CD4-positive, alpha-beta memory T cell (primary cell): ENCODE measurements at regions of chr5 and their contacts with region 1.

Region 1: DNA sequence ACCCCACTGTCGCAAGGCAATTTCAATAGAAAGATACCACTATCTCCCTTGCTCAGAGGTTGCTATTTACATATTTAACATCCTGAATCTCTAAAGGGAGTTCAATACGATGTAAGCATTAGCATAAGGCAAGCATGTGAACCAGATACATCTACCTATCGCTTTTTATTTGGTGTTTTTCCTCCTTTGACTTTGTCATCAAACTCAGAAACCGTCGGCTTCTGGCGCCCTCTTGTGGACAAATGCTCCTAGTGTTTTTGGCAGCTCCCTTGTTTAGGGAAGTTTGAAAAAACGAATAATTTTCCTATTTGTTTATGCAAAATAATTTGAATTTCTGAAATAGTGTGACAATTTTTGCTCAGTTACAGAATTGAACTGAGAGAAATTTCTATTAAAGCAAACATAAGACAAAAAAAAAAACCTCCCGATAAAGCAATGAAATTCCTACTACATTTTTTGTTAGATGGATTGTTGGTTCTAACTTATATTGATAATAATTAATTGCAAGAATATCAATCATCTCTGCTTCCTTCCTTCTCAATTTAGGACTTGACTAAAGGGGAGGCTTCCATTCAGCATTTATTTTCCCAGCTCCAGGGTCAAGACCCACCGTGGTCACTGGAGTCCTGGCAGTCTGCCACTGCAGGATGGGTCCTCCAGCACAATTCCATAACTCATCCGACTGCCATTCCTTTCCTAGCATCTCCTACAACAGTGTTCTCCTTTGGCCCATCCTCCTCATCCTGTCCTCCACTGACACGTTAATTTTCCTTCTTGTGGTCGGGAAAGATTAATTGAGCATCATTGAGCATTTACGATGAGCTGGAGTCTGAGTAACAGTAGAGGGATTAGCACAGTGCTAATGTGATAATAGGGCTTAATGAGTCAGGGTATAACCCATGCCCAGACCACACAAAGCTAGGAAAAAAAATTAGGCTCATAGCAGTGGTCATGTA is 131.8 kb upstream of the CHD1 start:
- DNase-seq: peak; percentile 77 to 84 (median 82)
- H3K4me3 ChIP-seq: no peak overlapping the region
- H3K4me3 Mint-ChIP-seq: peak overlapping the region in 5 of 8 donors; percentile 22 to 54 (median 40)
- H3K27ac ChIP-seq: no peak overlapping the region
- H3K27ac Mint-ChIP-seq: peak overlapping the region in 2 of 7 donors; percentile 53 to 71
- H3K4me1 ChIP-seq: no peaks in the 10 kb centered on the region
- H3K4me1 Mint-ChIP-seq: peaks cover 2 to 19% (median 11%) of the 10 kb centered on the region in 4 donors
- H3K27me3 ChIP-seq: no peaks in the 10 kb centered on the region
- H3K27me3 Mint-ChIP-seq: peaks cover 0 to 2% of the 10 kb centered on the region in 2 donors

Region 2: DNA sequence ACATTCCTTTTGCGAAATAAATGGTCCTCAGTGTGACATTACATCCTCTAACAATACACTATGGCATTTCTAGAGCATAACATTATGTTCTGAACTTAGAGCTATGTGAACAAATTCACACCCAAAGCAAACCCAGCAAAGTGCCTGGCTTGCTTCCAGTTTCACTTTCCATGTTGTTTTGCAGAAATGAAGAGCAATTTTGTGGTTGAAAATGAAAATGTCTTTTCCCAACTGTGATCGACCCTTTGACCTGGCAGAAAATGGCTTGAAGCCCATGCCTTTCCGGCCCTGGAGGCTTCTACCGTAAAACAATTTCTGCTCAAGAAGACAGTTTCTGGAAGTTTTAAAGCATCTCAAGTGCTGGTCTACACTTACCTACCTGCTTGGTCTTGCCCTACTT is 631.8 kb before region 1 on chr5:
- CTCF ChIA-PET with region 1: no interaction called
- POLR2A ChIA-PET with region 1: no interaction called
- intact Hi-C with region 1: no loop called
- DNase-seq: no peak
- H3K4me3 ChIP-seq: no peak overlapping the region
- H3K4me3 Mint-ChIP-seq: no peak overlapping the region
- H3K27ac ChIP-seq: no peak overlapping the region
- H3K27ac Mint-ChIP-seq: no peak overlapping the region
- H3K4me1 ChIP-seq: no peaks in the 10 kb centered on the region
- H3K4me1 Mint-ChIP-seq: peaks cover 0 to 6% (median 0%) of the 10 kb centered on the region in 4 donors
- H3K27me3 ChIP-seq: no peaks in the 10 kb centered on the region
- H3K27me3 Mint-ChIP-seq: no peaks in the 10 kb centered on the region

Region 3: GRCh38 chr5:98905857-98906690 is 154.5 kb before region 1 on chr5:
- CTCF ChIA-PET with region 1: interaction called, 72 read pairs
- POLR2A ChIA-PET with region 1: interaction called, 22 read pairs
- intact Hi-C with region 1: loop called (anchors 1 kb)
- DNase-seq: peak in 4 of 5 donors; percentile 63 to 69 (median 66)
- H3K4me3 ChIP-seq: no peak overlapping the region
- H3K4me3 Mint-ChIP-seq: peak overlapping the region in 2 of 8 donors; percentile 3 to 11
- H3K27ac ChIP-seq: no peak overlapping the region
- H3K27ac Mint-ChIP-seq: peak overlapping the region in 6 of 7 donors; percentile 1 to 54 (median 10)
- H3K4me1 ChIP-seq: peaks cover 48% of the 10 kb centered on the region
- H3K4me1 Mint-ChIP-seq: peaks cover 33 to 58% (median 44%) of the 10 kb centered on the region in 4 donors
- H3K27me3 ChIP-seq: no peaks in the 10 kb centered on the region
- H3K27me3 Mint-ChIP-seq: no peaks in the 10 kb centered on the region

Region 4: DNA sequence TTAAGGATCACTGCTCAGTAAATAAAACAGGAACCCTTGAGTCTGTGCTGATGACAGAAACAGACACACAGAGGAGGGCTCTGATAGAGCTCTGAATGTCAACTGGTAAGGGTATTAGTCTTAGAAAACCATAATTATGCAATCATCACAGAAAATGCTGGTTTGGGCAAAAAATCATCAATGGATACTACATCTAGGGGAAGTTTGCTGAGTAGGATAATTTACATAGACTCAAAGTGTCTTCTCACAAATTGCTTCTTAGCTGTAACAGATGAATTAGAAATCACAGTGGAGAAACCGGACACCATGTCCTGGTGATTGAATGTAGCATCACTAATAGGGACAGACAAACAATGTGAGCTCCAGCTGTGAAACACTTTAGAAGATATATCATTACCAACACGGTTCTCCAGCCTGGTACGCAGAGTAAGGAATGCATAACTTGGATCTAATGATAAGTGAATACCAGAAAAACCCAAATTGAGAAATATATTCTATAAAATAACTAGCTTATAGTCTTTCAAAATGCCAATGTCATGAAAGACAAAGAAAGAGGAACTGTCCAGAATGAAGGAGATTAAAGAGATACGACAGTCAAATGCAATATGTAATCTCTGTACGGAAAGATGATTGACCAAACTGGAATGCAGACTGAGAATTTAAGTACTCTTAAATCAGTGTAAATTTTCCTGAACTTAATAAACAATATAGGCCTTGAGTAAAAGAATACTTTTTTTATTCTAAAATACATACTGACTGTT is 149.1 kb before region 1 on chr5:
- CTCF ChIA-PET with region 1: interaction called, 41 read pairs
- POLR2A ChIA-PET with region 1: interaction called, 5 read pairs
- intact Hi-C with region 1: loop called (anchors 1 kb)
- DNase-seq: no peak
- H3K4me3 ChIP-seq: no peak overlapping the region
- H3K4me3 Mint-ChIP-seq: peak overlapping the region in 2 of 8 donors; percentile 7 to 26
- H3K27ac ChIP-seq: no peak overlapping the region
- H3K27ac Mint-ChIP-seq: peak overlapping the region in 4 of 7 donors; percentile 0 to 69 (median 20)
- H3K4me1 ChIP-seq: peaks cover 80% of the 10 kb centered on the region
- H3K4me1 Mint-ChIP-seq: peaks cover 50 to 78% (median 64%) of the 10 kb centered on the region in 4 donors
- H3K27me3 ChIP-seq: no peaks in the 10 kb centered on the region
- H3K27me3 Mint-ChIP-seq: no peaks in the 10 kb centered on the region

Region 5: GRCh38 chr5:99025298-99026045 is 35.1 kb before region 1 on chr5:
- CTCF ChIA-PET with region 1: interaction called, 21 read pairs
- POLR2A ChIA-PET with region 1: interaction called, 6 read pairs
- intact Hi-C with region 1: no loop called
- DNase-seq: no peak
- H3K4me3 ChIP-seq: no peak overlapping the region
- H3K4me3 Mint-ChIP-seq: no peak overlapping the region
- H3K27ac ChIP-seq: no peak overlapping the region
- H3K27ac Mint-ChIP-seq: no peak overlapping the region
- H3K4me1 ChIP-seq: peaks cover 17% of the 10 kb centered on the region
- H3K4me1 Mint-ChIP-seq: peaks cover 21 to 38% (median 27%) of the 10 kb centered on the region in 4 donors
- H3K27me3 ChIP-seq: no peaks in the 10 kb centered on the region
- H3K27me3 Mint-ChIP-seq: no peaks in the 10 kb centered on the region

Region 6: DNA sequence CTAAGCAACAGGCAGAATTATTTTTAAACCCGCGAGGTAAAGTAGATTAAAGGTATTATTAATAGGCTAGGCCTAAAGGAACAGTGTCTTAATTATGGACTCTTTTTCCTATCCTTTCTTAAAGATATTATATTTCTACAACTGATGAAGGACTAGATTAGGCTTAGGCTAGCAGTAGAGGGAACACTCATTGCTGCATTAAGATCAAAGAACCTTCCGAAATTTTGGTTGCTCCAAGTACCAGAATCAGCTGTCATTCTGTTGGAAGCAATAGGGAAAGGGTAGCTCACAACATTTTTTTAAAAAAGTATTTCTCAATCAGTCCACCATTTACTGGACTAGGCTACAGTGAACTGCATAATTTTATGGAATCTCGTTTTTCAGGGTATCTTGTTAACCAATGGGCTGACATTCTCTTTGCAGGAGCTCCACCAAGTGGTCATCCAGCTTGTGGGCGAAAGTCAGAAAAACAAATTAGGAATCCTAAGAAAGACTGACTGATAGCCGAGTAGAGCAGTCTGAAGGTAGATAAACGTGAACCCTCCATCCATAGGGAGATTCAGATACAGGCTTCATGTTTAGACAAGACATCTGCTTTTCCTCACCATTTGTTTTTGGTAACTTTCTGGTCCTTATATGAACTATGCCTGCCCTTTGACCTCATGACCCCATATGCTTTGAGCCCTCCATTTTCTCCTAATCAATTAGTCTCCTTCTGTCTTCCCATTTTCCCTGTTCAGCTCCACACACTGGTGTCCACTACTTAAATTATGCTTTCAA is 28.2 kb before region 1 on chr5:
- CTCF ChIA-PET with region 1: interaction called, 37 read pairs
- POLR2A ChIA-PET with region 1: interaction called, 25 read pairs
- intact Hi-C with region 1: loop called (anchors 1 kb)
- DNase-seq: peak in 3 of 5 donors; percentile 18 to 21 (median 19)
- H3K4me3 ChIP-seq: peak overlapping the region in 1 of 2 donors; percentile 33
- H3K4me3 Mint-ChIP-seq: peak overlapping the region; percentile 82 to 92 (median 88)
- H3K27ac ChIP-seq: peak overlapping the region; percentile 71
- H3K27ac Mint-ChIP-seq: peak overlapping the region; percentile 90 to 99 (median 98)
- H3K4me1 ChIP-seq: peaks cover 69% of the 10 kb centered on the region
- H3K4me1 Mint-ChIP-seq: peaks cover 58 to 89% (median 71%) of the 10 kb centered on the region in 4 donors
- H3K27me3 ChIP-seq: no peaks in the 10 kb centered on the region
- H3K27me3 Mint-ChIP-seq: no peaks in the 10 kb centered on the region

Region 7: DNA sequence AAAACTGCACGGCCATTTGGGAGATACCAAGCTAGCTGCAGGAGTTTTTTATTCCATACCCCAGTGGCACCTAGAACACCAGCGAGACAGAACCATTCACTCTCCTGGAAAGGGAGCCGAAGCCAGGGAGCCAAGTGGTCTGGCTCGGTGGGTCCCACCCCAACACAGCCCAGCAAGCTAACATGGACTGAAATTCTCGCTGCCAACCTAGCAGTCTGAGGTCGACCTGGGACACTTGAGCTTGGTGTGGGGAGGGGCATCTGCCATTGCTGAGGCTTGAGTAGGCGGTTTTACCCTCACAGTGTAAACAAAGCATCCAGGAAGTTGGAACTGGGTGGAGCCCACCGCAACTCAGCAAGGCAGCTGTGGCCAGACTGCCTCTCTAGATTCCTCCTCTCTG is 22.9 kb before region 1 on chr5:
- CTCF ChIA-PET with region 1: interaction called, 37 read pairs
- POLR2A ChIA-PET with region 1: interaction called, 25 read pairs
- intact Hi-C with region 1: loop called (anchors 1 kb)
- DNase-seq: peak; percentile 78 to 85 (median 81)
- H3K4me3 ChIP-seq: peak overlapping the region; percentile 3 to 52
- H3K4me3 Mint-ChIP-seq: peak overlapping the region; percentile 34 to 83 (median 64)
- H3K27ac ChIP-seq: peak overlapping the region; percentile 48
- H3K27ac Mint-ChIP-seq: peak overlapping the region; percentile 83 to 93 (median 89)
- H3K4me1 ChIP-seq: peaks cover 62% of the 10 kb centered on the region
- H3K4me1 Mint-ChIP-seq: peaks cover 48 to 82% (median 61%) of the 10 kb centered on the region in 4 donors
- H3K27me3 ChIP-seq: no peaks in the 10 kb centered on the region
- H3K27me3 Mint-ChIP-seq: no peaks in the 10 kb centered on the region

Region 8: GRCh38 chr5:99045871-99046270 is 14.7 kb before region 1 on chr5:
- CTCF ChIA-PET with region 1: interaction called, 17 read pairs
- POLR2A ChIA-PET with region 1: interaction called, 3 read pairs
- intact Hi-C with region 1: no loop called
- DNase-seq: no peak
- H3K4me3 ChIP-seq: no peak overlapping the region
- H3K4me3 Mint-ChIP-seq: peak overlapping the region in 2 of 8 donors; percentile 25 to 46
- H3K27ac ChIP-seq: no peak overlapping the region
- H3K27ac Mint-ChIP-seq: peak overlapping the region in 3 of 7 donors; percentile 22 to 73 (median 51)
- H3K4me1 ChIP-seq: peaks cover 14% of the 10 kb centered on the region
- H3K4me1 Mint-ChIP-seq: peaks cover 4 to 23% (median 12%) of the 10 kb centered on the region in 4 donors
- H3K27me3 ChIP-seq: no peaks in the 10 kb centered on the region
- H3K27me3 Mint-ChIP-seq: no peaks in the 10 kb centered on the region

Region 9: DNA sequence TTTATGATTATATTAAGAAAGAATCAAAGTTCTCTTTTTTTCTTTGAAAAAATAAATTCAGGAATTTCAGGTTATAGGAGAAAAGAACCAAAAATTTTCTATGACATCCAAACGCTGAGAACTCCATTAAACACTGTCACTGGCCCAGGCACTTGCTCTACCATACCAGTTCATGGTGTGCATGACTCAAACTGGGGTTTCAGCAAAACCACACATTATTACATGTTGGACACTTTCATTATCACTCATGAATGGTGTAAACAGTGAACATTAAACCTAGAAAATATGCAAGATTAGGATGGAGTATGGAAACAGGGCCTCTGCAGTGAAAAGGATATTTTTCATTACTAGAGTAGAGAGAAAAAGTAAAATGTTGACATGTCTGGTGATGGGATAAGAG is 1104.7 kb after region 1 on chr5:
- CTCF ChIA-PET with region 1: no interaction called
- POLR2A ChIA-PET with region 1: no interaction called
- intact Hi-C with region 1: no loop called
- DNase-seq: no peak
- H3K4me3 ChIP-seq: no peak overlapping the region
- H3K4me3 Mint-ChIP-seq: no peak overlapping the region
- H3K27ac ChIP-seq: no peak overlapping the region
- H3K27ac Mint-ChIP-seq: no peak overlapping the region
- H3K4me1 ChIP-seq: no peaks in the 10 kb centered on the region
- H3K4me1 Mint-ChIP-seq: no peaks in the 10 kb centered on the region
- H3K27me3 ChIP-seq: no peaks in the 10 kb centered on the region
- H3K27me3 Mint-ChIP-seq: no peaks in the 10 kb centered on the region